GM10248 (cell line): ENCODE measurements at regions of chr12 and their contacts with region 1.

Region 1: GRCh38 chr12:8890313-8891085 is 23.8 kb upstream of the PHC1 start:
- DNase-seq: peak; percentile 73
- CTCF ChIP-seq: peak; percentile 85

Region 2: GRCh38 chr12:8655421-8655820 is 235.1 kb before region 1 on chr12:
- CTCF ChIA-PET with region 1: interaction called, 21 read pairs
- POLR2A ChIA-PET with region 1: no interaction called
- DNase-seq: no peak
- CTCF ChIP-seq: no peak

Region 3: GRCh38 chr12:8681041-8681902 is 209.2 kb before region 1 on chr12:
- CTCF ChIA-PET with region 1: interaction called, 24 read pairs
- POLR2A ChIA-PET with region 1: no interaction called
- DNase-seq: no peak
- CTCF ChIP-seq: no peak

Region 4: DNA sequence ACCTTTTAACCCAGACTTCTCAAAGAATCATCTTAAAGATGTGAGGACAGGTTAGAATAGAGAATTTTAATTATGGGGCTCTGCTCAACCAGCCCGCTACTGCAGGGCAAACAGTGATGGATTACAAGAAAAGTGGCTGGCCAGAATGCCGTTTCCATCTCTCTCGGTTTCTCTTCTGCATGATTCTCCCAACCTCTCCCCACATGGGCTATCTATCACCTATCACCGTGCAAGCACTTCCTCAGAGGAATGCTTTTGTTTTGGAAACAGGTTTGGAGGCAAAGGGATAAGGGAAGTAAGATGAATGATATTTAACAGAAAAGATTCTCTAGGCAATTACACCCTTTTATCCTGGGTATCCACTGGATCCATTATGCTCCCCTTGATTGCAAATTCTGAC is 13.6 kb before region 1 on chr12:
- CTCF ChIA-PET with region 1: interaction called, 16 read pairs
- POLR2A ChIA-PET with region 1: no interaction called
- DNase-seq: no peak
- CTCF ChIP-seq: no peak

Region 5: GRCh38 chr12:8914716-8915526 is 24.4 kb after region 1 on chr12:
- CTCF ChIA-PET with region 1: interaction called, 12 read pairs
- POLR2A ChIA-PET with region 1: no interaction called
- DNase-seq: peak; percentile 81
- CTCF ChIP-seq: no peak